Astrocyte of the cerebellum (primary cell): ENCODE measurements at regions of chr22 and their contacts with region 1.

Region 1: DNA sequence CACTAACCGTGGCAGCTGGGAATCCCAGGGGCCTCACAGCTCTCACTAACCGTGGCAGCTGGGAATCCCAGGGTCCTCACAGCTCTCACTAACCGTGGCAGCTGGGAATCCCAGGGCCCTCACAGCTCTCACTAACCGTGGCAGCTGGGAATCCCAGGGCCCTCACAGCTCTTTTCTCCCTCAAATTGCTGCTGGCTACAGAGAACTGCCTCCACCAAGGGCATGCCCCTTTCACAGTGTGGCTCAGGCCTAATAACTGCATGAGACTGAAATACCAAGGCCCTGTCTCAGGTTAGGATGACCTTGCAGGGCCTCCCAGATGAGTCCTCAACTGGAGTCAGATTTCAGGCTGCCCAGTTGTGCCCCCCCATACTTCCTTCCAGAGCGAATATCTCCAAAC is 35.1 kb upstream of the GGTLC2 start:
- DNase-seq: no peak
- H3K4me3 ChIP-seq: no peak overlapping the region
- CTCF ChIP-seq: no peak

Region 2: DNA sequence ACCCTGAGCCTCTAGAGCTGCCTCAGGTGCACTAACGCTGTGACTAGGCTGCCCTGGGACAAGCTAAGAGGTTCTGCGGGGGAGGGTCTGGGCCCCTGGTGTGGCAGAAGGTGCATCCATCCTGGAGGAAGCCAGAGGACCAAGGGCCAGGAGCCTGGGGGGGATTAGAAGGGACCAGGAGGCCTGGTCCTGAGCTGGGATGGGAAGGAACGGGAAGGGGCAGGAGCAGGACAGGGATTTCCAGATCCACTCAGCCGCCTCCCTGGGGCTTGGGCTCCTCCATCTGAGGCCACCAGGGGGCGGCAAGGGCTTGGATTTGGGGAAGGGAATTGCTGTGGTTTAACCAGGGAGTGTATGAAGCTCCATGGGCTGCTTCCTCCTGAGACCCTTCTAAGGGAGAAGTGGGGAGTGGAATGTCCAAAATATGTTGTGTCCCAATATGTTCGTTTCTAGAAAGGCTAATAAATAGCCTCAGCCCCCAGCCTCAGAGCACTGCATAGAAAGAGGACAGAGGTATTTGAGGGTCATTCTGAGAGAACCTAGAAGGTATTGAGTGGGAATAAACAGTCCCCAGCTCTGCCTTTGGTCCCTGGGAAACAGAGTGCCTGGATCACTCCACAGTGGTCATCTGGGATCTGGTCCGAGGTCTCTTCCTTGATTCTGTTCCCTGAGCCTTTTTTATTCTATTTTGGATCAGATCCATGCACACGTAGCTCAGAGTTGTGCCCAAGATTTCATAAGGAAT is 32.9 kb before region 1 on chr22:
- in situ Hi-C with region 1: no loop called
- DNase-seq: peak; percentile 3
- H3K4me3 ChIP-seq: no peak overlapping the region
- CTCF ChIP-seq: peak; percentile 84

Region 3: GRCh38 chr22:22673628-22674027 is 64.3 kb after region 1 on chr22:
- in situ Hi-C with region 1: loop called (anchors 10 kb)
- DNase-seq: no peak
- H3K4me3 ChIP-seq: no peak overlapping the region
- CTCF ChIP-seq: no peak